ENCODE measurements at regions of chr9 and their contacts with region 1.

Region 1: DNA sequence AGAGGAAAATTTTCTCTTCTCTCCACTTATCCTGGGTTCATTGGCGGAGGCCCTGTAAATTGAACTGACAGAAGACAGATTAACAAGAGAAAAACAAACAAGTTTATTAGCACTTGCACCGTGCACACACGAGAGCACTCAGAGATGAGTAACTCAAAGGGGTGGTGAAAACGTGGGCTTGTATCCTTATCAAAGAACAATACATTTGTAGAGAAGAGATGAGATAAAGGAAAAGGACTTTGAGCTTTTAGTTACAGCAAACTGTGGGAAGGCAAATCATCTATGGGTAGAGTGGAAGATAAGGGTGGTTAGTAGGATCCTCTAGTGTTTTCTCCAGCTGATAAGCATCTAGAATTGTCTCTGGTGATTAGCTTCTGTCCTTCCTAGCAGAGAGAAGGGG is 44.4 kb upstream of the ROR2 start:
- DNase-seq: peak; percentile 56 to 76
- H3K4me3 ChIP-seq: no peak overlapping the region
- H3K4me3 Mint-ChIP-seq: peak overlapping the region; percentile 54
- H3K27ac Mint-ChIP-seq: no peak overlapping the region
- H3K4me1 ChIP-seq: peaks cover 18% of the 10 kb centered on the region
- H3K4me1 Mint-ChIP-seq: peaks cover 20% of the 10 kb centered on the region
- H3K27me3 ChIP-seq: no peaks in the 10 kb centered on the region
- H3K27me3 Mint-ChIP-seq: peaks cover 3% of the 10 kb centered on the region
- CTCF ChIP-seq: no peak

Region 2: GRCh38 chr9:90665072-90665471 is 1329.3 kb before region 1 on chr9:
- CTCF ChIA-PET with region 1: no interaction called
- POLR2A ChIA-PET with region 1: no interaction called
- intact Hi-C with region 1: no loop called
- DNase-seq: no peak
- H3K4me3 ChIP-seq: no peak overlapping the region
- H3K4me3 Mint-ChIP-seq: no peak overlapping the region
- H3K27ac Mint-ChIP-seq: no peak overlapping the region
- H3K4me1 ChIP-seq: no peaks in the 10 kb centered on the region
- H3K4me1 Mint-ChIP-seq: no peaks in the 10 kb centered on the region
- H3K27me3 ChIP-seq: no peaks in the 10 kb centered on the region
- H3K27me3 Mint-ChIP-seq: peaks cover 6% of the 10 kb centered on the region
- CTCF ChIP-seq: no peak

Region 3: GRCh38 chr9:91647371-91647770 is 347.1 kb before region 1 on chr9:
- CTCF ChIA-PET with region 1: no interaction called
- POLR2A ChIA-PET with region 1: no interaction called
- intact Hi-C with region 1: no loop called
- DNase-seq: no peak
- H3K4me3 ChIP-seq: no peak overlapping the region
- H3K4me3 Mint-ChIP-seq: no peak overlapping the region
- H3K27ac Mint-ChIP-seq: no peak overlapping the region
- H3K4me1 ChIP-seq: no peaks in the 10 kb centered on the region
- H3K4me1 Mint-ChIP-seq: peaks cover 7% of the 10 kb centered on the region
- H3K27me3 ChIP-seq: no peaks in the 10 kb centered on the region
- H3K27me3 Mint-ChIP-seq: no peaks in the 10 kb centered on the region
- CTCF ChIP-seq: no peak

Region 4: DNA sequence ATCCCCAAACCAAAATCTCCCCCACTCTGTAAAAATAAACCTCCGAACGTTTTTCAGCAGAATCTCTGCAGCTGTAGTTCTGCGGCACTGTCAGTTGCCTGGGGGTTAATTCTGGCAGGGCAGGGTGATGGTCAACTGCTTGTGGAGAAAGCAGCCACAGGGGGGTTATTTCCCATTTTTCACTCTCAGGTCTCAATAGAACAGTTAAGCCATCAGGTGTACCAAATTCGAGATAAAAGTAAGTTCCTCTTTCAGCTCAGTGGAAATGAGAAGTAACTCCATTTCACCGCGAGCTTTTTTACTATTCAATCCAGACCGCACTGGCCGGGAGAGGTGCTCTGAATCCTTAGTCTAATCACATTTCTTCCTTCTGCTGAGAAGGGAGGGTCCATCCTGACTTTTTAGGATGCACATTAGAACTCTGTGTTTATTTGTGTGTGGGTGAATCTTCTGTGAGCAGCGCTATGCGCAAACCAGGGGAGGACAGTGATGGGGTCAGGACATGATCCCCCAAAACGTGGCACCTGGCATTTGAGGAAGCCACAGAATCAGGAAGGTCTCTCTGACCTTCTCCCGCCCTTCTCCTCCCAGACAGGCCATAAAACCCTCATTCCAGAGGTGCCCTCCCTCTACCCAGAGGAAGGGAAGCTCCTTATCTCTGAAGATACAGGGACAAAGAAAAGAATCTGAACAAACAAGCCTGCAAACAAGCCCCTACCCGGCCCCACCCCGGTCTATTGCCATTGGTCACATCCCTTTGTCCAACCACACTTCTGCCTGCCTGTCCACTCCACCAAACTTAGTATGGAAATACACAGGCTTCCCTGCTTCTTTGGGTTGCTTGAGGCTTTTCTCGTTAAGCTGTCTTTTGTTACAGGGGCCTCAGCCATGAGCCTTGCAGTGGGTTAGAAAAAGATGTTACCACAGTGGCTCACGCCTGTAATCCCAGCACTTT is 273.4 kb before region 1 on chr9:
- CTCF ChIA-PET with region 1: no interaction called
- POLR2A ChIA-PET with region 1: no interaction called
- intact Hi-C with region 1: no loop called
- DNase-seq: peak; percentile 68 to 83
- H3K4me3 ChIP-seq: no peak overlapping the region
- H3K4me3 Mint-ChIP-seq: peak overlapping the region; percentile 24
- H3K27ac Mint-ChIP-seq: no peak overlapping the region
- H3K4me1 ChIP-seq: peaks cover 8% of the 10 kb centered on the region
- H3K4me1 Mint-ChIP-seq: no peaks in the 10 kb centered on the region
- H3K27me3 ChIP-seq: no peaks in the 10 kb centered on the region
- H3K27me3 Mint-ChIP-seq: no peaks in the 10 kb centered on the region
- CTCF ChIP-seq: no peak

Region 5: GRCh38 chr9:91884696-91885687 is 109.4 kb before region 1 on chr9:
- CTCF ChIA-PET with region 1: no interaction called
- POLR2A ChIA-PET with region 1: no interaction called
- intact Hi-C with region 1: no loop called
- DNase-seq: no peak
- H3K4me3 ChIP-seq: no peak overlapping the region
- H3K4me3 Mint-ChIP-seq: no peak overlapping the region
- H3K27ac Mint-ChIP-seq: no peak overlapping the region
- H3K4me1 ChIP-seq: no peaks in the 10 kb centered on the region
- H3K4me1 Mint-ChIP-seq: no peaks in the 10 kb centered on the region
- H3K27me3 ChIP-seq: no peaks in the 10 kb centered on the region
- H3K27me3 Mint-ChIP-seq: no peaks in the 10 kb centered on the region
- CTCF ChIP-seq: no peak

Region 6: DNA sequence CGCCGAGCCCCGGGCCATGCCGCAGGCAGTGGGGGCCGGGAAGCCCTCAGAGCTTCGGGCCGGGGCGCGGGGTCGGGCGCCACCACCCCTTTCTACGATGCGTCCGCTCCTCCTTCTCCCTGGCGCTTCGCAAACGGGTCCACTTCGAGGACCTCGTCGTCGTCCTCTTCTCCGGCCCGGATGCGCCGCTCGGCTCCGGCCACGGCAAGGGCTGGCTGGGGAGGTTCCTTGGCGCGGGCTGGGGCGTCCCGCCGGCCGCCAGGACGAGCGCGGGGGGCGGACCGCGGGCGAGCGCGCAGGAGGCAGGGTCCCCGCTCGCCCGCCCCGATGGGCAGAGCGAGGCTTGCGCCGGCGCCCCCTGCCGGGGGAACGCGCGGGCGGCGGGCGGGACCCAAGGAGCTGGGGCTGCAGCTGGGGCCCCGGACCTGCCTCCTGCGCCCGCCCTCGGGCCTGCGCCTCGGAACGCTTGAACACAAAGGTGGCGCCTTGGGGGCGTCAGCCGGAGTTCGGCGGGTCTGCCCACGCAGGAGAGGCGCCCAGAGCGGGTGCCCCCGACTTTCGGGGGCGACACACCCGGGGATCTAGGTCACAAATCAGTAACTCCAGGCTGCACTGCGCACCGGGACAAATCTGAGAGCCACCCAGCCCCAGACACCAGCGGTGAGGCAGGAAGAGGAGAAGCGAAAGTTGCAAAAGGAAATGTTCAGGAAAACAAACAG is 44.3 kb before region 1 on chr9 and contains the start of gene ROR2:
- CTCF ChIA-PET with region 1: no interaction called
- POLR2A ChIA-PET with region 1: no interaction called
- intact Hi-C with region 1: loop called (anchors 2 kb)
- DNase-seq: peak in 1 of 2 experiments; percentile 76
- H3K4me3 ChIP-seq: peak within 1 kb of the TSS; percentile 29
- H3K4me3 Mint-ChIP-seq: peak within 1 kb of the TSS; percentile 73
- H3K27ac Mint-ChIP-seq: no peak within 1 kb of the TSS
- H3K4me1 ChIP-seq: no peaks in the 10 kb centered on the region
- H3K4me1 Mint-ChIP-seq: peaks cover 8% of the 10 kb centered on the region
- H3K27me3 ChIP-seq: no peaks in the 10 kb centered on the region
- H3K27me3 Mint-ChIP-seq: no peaks in the 10 kb centered on the region
- CTCF ChIP-seq: peak in 1 of 2 experiments; percentile 19
- total RNA-seq, gene ROR2: 0.68 and 0.95 TPM in 2 replicates

Region 7: DNA sequence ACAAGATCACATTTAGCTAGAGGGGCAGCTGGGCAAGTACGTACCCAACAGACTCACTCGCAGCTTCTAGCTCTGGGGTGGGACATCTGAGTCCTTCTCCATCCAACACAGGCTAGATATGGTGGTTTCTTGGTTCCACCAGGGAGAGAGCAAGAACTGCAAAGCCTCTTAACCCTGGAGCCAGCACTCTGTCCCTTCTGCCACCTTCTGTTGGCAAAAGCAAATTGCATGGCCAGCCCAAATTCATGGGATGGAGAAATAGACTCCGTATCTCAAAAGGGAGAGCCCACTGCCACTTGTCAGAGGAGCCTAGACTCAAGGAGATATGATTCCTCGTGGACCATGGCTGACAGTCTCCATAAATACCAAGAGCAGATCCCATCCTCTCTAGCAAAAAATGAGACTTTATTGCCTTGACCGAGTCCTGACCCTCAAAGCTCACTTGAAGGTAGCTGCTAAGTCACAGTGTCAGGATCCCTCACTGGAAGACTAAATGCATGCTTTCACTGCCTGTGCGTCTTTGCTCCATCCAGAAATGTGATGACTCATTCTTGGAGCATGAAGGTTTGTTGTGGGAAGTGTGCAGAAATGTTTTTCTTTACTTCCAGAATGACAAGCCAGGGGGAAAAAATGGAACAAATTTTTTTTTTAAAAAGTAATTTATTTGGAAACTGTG is 15.5 kb before region 1 on chr9:
- CTCF ChIA-PET with region 1: no interaction called
- POLR2A ChIA-PET with region 1: no interaction called
- intact Hi-C with region 1: loop called (anchors 1 kb)
- DNase-seq: peak; percentile 6 to 34
- H3K4me3 ChIP-seq: no peak overlapping the region
- H3K4me3 Mint-ChIP-seq: no peak overlapping the region
- H3K27ac Mint-ChIP-seq: no peak overlapping the region
- H3K4me1 ChIP-seq: no peaks in the 10 kb centered on the region
- H3K4me1 Mint-ChIP-seq: no peaks in the 10 kb centered on the region
- H3K27me3 ChIP-seq: no peaks in the 10 kb centered on the region
- H3K27me3 Mint-ChIP-seq: no peaks in the 10 kb centered on the region
- CTCF ChIP-seq: peak in 1 of 2 experiments; percentile 8